ENCODE measurements at regions of chr2 and their contacts with region 1.

Region 1: DNA sequence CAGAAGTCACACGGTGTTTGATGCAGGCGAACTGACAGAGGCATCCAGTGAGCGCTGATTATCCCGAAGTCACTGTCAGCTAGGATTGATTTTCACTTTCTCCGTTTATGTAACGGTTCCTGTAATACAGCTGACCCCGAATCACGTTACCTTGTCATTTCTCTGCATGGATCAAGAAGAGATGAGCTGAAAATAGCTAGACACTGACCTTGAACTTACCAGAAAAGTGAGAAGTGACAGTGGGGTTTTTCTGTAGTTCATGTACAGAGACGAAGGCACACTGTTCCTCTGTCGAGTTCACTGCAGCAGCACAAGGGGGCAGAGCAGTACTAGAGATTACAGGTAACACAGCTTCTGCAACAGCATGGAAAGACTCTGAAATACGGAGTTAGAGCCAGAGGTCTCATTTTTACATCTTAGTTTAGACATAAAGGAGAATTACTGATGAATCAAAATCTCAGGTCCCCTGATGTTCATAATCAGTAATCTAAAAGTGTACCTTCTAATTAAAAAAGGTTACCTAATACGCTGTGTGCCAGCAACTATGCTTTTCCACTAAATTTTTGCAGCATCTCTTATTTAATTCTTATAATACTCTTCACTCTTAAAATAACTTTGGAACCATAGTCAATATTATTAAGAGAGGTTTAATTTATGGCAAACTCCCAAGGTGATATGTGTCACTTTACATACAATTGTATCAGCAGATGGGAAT is 33.1 kb downstream of the ARHGAP15 start:
- DNase-seq: no peak
- CTCF ChIP-seq: peak; percentile 73

Region 2: DNA sequence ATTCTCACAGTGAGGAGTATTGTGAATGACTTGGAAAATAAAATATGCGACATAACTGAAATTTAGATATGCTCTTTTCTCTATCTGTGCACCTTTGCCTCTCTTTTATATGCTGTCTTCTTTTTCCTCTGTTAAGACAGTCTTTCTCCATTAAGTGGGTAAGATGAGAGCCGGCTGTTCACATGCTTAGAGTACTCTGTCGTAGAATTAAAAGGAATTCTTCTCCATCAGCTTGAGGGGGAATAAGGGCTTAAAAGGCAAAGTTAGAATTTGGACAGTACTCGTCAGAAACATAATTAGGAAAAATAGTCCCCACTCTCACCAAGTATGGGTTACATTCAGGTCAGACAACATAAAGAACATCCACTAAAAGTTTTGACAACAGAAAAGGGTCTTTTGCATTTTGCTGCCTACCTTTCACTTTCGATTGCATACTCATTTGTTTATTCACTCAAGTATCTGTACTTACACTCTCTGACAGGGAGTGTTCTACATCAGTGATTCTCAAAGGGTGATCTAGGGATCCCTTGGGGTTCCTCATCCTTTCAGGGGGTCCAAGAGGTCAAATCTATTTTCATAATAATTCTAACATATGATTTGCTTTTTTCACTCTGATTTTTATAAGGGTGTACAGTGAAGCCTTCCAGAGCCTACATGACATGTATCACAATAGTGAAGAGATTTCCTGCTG is 15.0 kb after region 1 on chr2:
- CTCF ChIA-PET with region 1: interaction called, 77 read pairs
- POLR2A ChIA-PET with region 1: no interaction called
- DNase-seq: peak; percentile 36
- CTCF ChIP-seq: no peak

Region 3: GRCh38 chr2:143190431-143190830 is 28.2 kb after region 1 on chr2:
- CTCF ChIA-PET with region 1: interaction called, 16 read pairs
- POLR2A ChIA-PET with region 1: no interaction called
- DNase-seq: no peak
- CTCF ChIP-seq: no peak

Region 4: GRCh38 chr2:143223556-143223955 is 61.3 kb after region 1 on chr2:
- CTCF ChIA-PET with region 1: interaction called, 37 read pairs
- POLR2A ChIA-PET with region 1: no interaction called
- DNase-seq: no peak
- CTCF ChIP-seq: no peak

Measured in GM10248 (cell line).